ENCODE measurements at regions of chr1 and their contacts with region 1.

Region 1: DNA sequence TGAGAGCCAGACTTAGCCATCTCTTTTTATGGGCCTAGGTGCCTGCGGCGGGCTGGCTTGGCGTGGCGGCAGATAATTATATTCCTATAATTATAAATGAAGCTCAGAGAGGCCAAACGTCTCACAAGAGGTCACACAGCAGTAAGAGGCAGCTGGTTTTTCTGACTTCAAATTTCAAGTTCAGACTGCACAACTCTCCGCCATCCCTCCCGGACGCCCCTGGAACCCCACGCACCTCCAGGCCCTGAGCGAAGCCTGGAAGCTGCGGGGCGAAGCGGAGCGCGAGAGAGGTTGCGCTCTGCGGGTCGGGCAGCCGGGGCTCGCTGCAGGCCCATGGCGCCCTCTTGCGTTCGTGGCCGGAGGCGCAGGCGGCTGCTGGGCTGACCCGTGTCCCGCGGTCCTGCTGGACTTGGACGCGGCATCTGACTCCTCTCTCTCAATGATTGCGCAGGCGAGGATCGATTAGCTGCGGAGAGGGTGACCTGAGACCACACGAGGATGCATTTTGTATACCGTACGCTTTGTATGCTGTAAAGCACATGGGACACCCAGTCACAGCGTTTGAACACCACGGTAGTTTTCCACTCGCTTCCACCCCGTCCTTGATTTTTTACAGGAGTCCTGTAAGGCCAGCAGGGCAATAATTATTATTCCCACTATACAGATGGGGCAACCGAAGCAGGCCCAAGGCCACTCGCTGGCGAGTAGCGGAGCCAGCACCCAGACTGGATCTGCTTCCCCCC is 272.7 kb downstream of the FOXD2 start:
- DNase-seq: peak; percentile 80
- ATAC-seq: peak; percentile 92 to 93
- H3K4me3 ChIP-seq: peak overlapping the region; percentile 46
- H3K27ac ChIP-seq: no peak overlapping the region
- H3K4me1 ChIP-seq: peaks cover 23% of the 10 kb centered on the region
- H3K27me3 ChIP-seq: peaks cover 74% of the 10 kb centered on the region
- CTCF ChIP-seq: peak; percentile 100

Region 2: GRCh38 chr1:47449822-47450552 is 260.5 kb before region 1 on chr1:
- intact Hi-C with region 1: loop called (anchors 10 kb)
- DNase-seq: peak; percentile 67
- ATAC-seq: peak; percentile 85 to 89
- H3K4me3 ChIP-seq: no peak overlapping the region
- H3K27ac ChIP-seq: no peak overlapping the region
- H3K4me1 ChIP-seq: peaks cover 5% of the 10 kb centered on the region
- H3K27me3 ChIP-seq: peaks cover 69% of the 10 kb centered on the region
- CTCF ChIP-seq: peak; percentile 57

Region 3: DNA sequence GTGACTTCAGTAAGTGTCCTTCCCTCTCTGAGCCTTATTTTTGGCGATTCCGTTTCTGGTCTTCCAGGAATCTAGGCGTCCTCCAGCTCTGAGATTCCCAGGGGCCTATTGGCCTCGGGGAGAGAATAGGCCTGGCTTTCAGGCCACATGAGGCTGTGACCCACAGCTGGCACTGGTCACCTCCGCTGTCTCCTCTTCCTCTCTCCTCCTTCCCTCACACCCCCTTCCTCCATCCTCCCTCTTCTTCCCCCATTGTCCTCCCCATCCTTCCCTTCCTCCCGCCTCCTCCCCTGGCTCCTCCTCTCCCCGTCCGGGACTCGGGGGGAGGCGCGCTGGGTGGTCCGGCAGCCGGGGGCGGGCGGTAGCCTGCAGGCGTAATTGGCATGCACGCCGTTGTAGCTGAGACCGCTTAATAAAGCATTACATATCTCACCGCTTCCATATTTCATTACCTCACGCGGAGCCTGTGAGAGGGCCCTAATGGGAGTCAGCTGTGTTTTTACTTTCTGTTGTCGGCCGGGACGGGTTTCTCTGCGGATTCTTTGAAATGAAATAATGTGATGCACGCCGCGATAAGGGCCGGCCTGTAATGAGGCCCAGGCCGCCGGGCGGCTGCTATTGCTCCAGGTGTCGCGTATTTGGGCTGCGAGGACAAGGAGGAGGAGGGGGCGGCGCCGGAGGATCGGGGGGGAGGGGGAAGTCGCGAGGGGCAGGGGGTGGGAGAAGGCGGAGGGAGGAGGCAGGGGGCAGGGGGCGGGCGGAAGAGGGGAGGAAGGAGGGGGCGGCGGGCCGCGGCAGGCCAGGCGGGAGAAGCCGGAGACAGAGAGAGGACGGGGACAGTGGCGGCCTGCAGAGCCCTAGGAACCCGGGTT is 177.3 kb before region 1 on chr1:
- intact Hi-C with region 1: loop called (anchors 10 kb)
- DNase-seq: peak; percentile 47
- ATAC-seq: peak; percentile 64
- H3K4me3 ChIP-seq: peak overlapping the region; percentile 55
- H3K27ac ChIP-seq: no peak overlapping the region
- H3K4me1 ChIP-seq: peaks cover 22% of the 10 kb centered on the region
- H3K27me3 ChIP-seq: peaks cover 10% of the 10 kb centered on the region
- CTCF ChIP-seq: no peak

Region 4: GRCh38 chr1:47558601-47559593 is 151.6 kb before region 1 on chr1:
- intact Hi-C with region 1: no loop called
- DNase-seq: peak; percentile 57
- ATAC-seq: peak; percentile 64 to 76
- H3K4me3 ChIP-seq: peak overlapping the region; percentile 14
- H3K27ac ChIP-seq: peak overlapping the region; percentile 18
- H3K4me1 ChIP-seq: no peaks in the 10 kb centered on the region
- H3K27me3 ChIP-seq: no peaks in the 10 kb centered on the region
- CTCF ChIP-seq: no peak

Region 5: DNA sequence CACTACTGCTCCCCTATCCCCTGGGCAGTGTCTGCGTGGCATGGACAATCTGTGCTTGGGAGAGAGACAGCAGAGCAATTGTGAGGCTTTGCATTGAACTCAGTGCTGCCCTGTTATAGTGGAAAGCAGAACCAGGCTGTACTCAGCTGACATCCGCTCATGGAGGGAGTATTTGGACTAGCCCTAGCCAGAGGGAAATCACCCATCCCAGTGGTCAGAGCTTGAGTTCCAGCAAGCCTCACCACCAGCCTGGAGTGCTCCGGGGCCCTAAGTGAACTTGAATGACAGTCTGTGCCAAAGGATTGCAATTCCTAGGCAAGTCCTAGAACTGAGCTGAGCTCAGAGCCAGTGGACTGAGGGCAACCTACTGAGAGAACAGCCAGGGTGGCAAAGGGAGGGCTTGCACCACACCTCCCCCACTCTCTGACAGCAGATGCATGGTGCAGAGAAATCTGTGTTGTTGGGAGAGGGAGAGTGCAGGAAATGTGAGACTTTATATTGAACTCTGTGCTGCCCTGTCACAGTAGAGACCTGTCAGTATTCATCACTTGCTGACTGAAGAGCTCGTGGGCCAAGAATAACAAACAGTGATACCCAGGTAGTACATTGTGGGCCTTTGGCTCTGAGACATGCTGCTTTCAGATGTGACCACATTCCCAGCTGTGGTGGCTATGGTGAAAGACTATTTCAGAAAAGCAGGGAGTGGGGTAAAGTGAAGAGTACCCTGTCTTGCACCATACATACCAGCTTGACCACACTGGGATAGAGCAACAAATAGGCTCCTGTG is 404.3 kb after region 1 on chr1:
- intact Hi-C with region 1: no loop called
- DNase-seq: no peak
- ATAC-seq: no peak
- H3K4me3 ChIP-seq: no peak overlapping the region
- H3K27ac ChIP-seq: no peak overlapping the region
- H3K4me1 ChIP-seq: no peaks in the 10 kb centered on the region
- H3K27me3 ChIP-seq: no peaks in the 10 kb centered on the region
- CTCF ChIP-seq: no peak